Dorsolateral prefrontal cortex (tissue), 120 donors: ENCODE measurements at regions of chr6 and their contacts with region 1.

Region 1: GRCh38 chr6:105077596-105078385 is 102.0 kb downstream of the POPDC3 start:
- DNase-seq: no peak
- H3K4me3 ChIP-seq: no peak overlapping the region
- H3K27ac ChIP-seq: peak overlapping the region in 4 of 59 donors; percentile 0 to 40 (median 21)
- H3K27me3 ChIP-seq: no peaks in the 10 kb centered on the region
- CTCF ChIP-seq: peak; percentile 40 to 86 (median 68)

Region 2: DNA sequence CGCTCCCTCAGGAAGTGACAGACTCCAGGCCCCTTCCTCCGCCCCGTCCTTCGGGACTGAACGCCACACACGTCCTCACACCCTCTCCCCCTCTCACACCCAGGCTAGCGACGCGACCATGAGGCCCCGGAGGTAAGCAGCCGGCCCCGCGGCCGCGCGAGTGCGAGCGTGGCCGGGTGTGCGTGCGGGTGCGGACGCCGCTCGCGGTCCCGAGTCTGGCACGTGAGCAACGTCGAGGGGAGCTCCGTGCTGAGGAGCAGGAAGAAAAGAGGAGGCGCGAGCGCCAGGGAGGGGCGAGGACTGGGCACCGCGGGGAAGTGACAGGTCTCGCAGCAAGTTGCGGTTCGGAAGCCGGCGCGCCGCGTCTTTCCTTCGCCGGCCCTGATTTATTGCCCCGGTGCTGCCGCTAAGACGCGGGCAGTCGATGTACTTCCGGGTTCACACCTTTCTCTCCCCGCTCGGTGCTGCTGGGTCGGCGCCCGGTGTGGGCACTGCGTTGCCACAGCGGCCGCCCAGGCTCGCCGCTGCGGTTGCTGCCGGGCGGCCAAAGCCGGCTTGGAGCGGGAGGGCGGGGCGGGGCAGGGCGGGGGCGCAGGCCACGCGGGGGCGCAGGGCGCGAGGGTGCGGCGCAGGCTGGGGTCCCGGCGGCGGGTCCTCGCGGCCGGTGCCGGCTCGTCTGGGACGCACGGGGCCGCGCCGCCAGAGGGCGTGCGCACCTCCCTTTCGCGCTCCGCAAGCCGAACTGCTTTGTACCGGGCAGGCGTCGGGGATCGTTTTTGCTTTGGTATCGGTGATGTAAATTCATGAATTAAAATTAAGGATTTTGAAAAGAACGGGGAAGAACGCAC is 136.7 kb before region 1 on chr6:
- intact Hi-C with region 1: loop called (anchors 5 kb)
- DNase-seq: peak in 5 of 10 donors; percentile 37 to 79 (median 62)
- H3K4me3 ChIP-seq: peak overlapping the region; percentile 5 to 66 (median 46)
- H3K27ac ChIP-seq: peak overlapping the region in 9 of 59 donors; percentile 15 to 42 (median 34)
- H3K27me3 ChIP-seq: peaks cover 0 to 76% (median 60%) of the 10 kb centered on the region in 45 donors
- CTCF ChIP-seq: peak in 53 of 56 donors; percentile 26 to 65 (median 44)

Region 3: DNA sequence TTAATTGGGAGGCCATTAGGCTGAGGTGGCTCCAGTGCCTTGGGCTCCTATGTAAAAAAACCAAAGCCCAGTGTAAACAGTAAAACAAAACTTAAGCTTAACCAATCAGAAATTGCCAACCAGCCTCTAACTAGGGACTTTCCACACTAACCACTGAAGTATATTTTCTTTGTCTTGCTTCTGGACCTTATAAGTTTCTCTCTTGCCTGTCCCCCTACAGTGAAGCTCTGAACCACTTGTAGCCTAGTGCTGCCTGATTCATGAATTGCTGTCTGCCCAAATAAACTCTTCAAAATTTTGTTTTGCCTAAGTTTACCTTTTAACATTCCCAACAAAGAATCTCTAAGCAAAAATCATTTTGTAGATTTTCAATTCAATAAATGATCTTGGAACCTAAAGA is 73.9 kb after region 1 on chr6:
- intact Hi-C with region 1: no loop called
- DNase-seq: no peak
- H3K4me3 ChIP-seq: no peak overlapping the region
- H3K27ac ChIP-seq: no peak overlapping the region
- H3K27me3 ChIP-seq: no peaks in the 10 kb centered on the region
- CTCF ChIP-seq: no peak

Region 4: GRCh38 chr6:105282631-105283585 is 205.1 kb after region 1 on chr6:
- intact Hi-C with region 1: no loop called
- DNase-seq: peak in 3 of 10 donors; percentile 28 to 62 (median 36)
- H3K4me3 ChIP-seq: no peak overlapping the region
- H3K27ac ChIP-seq: peak overlapping the region in 35 of 59 donors; percentile 5 to 78 (median 34)
- H3K27me3 ChIP-seq: no peaks in the 10 kb centered on the region
- CTCF ChIP-seq: no peak